Activated CD4-positive, alpha-beta T cell treated with anti-CD3 and anti-CD28 coated beads, Interleukin-2, amount 10 ng/mL, durations not matched to agents 24 days and 14 days (primary cell): ENCODE measurements at regions of chr3 and their contacts with region 1.

Region 1: DNA sequence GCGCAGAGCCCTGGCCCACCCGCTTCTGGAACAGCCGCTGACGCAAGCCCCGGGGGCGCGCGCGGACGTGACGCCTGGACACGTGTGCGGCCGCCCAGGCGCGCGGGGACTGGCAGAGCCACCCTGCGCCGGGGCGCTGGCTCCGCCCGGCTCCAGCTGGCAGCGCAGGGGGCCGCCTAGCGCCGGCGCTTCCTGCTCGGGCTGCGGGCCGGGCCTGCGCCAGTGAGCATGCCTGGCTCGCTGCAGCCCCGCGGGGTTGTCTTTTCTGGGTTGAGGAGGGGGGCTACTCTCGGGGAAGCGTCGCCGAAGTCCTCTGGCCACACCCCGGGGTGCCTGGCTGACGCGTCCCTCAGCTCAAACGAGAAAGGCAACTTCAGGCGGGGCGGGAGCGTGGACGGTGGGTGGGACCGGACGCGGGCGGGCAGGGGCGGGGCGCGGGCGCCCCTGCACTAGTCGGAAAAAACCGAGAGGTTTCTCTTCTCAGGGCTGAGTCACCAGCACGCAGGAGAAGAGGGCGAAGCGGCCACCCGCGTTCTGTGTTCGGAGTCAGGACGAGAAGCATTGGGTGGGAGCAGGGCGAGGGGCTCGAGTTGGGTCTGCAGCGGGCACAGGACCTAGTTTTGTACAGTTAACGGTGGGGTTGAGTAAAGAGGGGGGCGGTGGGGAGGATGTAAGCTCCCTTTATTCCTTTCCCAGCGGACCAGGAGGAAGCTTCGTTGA is at the start of gene SIAH2:
- DNase-seq: peak; percentile 97
- H3K4me3 Mint-ChIP-seq: peak within 1 kb of the TSS; percentile 99
- H3K27ac Mint-ChIP-seq: peak within 1 kb of the TSS; percentile 100
- H3K4me1 Mint-ChIP-seq: peaks cover 51% of the 10 kb centered on the region
- H3K27me3 Mint-ChIP-seq: no peaks in the 10 kb centered on the region
- total RNA-seq, gene SIAH2: 130 and 133 TPM in 2 replicates

Region 2: GRCh38 chr3:150408221-150409102 is 354.8 kb before region 1 on chr3 and contains the start of gene TSC22D2:
- intact Hi-C with region 1: loop called (anchors 1 kb)
- DNase-seq: peak; percentile 99
- H3K4me3 Mint-ChIP-seq: peak within 1 kb of the TSS; percentile 81
- H3K27ac Mint-ChIP-seq: peak within 1 kb of the TSS; percentile 92
- H3K4me1 Mint-ChIP-seq: peaks cover 23% of the 10 kb centered on the region
- H3K27me3 Mint-ChIP-seq: peaks cover 8% of the 10 kb centered on the region
- total RNA-seq, gene TSC22D2: 16.4 and 18.7 TPM in 2 replicates

Region 3: DNA sequence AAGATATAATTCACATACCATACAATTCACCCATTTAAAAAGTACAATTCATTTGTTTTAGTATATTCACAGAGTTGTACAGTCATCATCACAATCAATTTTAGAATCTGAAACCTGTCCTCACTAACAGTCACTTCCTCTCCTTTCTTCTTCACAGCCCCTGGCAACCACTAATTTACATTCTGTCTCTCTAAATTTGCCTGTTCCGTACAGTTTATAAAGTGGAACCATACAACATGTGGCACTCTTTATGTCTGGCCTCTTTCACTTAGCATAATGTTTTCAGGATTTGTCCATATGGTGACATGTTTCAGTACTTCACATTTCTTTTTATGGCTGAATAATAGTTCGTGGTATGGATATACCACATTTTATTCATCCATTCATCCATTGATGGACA is 82.2 kb before region 1 on chr3:
- intact Hi-C with region 1: loop called (anchors 5 kb)
- DNase-seq: peak; percentile 68
- H3K4me3 Mint-ChIP-seq: peak overlapping the region; percentile 18
- H3K27ac Mint-ChIP-seq: peak overlapping the region; percentile 25
- H3K4me1 Mint-ChIP-seq: peaks cover 20% of the 10 kb centered on the region
- H3K27me3 Mint-ChIP-seq: peaks cover 4% of the 10 kb centered on the region

Region 4: GRCh38 chr3:150710097-150710496 is 53.2 kb before region 1 on chr3:
- intact Hi-C with region 1: no loop called
- DNase-seq: no peak
- H3K4me3 Mint-ChIP-seq: no peak overlapping the region
- H3K27ac Mint-ChIP-seq: no peak overlapping the region
- H3K4me1 Mint-ChIP-seq: peaks cover 9% of the 10 kb centered on the region
- H3K27me3 Mint-ChIP-seq: peaks cover 6% of the 10 kb centered on the region

Region 5: DNA sequence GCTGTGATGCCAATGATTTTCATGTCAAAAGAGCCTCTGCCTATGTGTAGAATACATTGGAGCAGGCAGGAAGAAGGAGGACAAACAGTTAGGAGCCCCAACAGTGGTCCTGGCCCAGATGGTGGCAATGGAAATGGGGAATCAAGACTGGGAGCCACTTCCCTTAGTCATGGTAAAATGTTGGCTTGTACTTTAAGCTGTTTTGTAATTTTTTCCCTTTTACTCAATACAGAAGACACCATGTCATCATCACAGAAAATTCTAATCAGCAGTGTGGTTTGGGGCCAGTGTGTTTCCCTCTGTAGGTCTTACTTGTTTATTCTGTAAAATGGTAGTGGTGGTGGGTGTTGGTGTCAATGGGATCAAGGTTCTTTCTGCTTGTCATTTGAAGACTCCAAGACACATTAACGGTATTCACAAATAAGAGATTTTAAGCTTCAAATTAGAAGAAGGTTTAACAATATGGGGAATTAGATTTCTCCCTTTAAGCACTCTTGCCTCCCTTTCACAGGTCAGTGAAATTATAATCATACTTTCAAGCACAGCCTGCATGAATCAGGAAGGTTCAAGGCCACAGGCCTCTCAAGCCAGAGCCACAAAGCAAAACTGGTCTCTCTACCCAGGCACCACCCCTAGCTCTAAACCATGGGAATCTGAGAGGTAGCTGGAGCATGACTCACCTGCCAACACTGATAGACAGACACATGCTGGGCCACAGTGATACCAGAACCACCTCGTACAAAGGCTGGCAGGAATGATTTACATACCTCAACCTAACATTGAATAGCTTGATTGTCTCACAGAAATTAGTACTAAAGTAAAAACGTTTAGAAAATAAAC is 25.2 kb before region 1 on chr3:
- intact Hi-C with region 1: loop called (anchors 1 kb)
- DNase-seq: peak; percentile 72
- H3K4me3 Mint-ChIP-seq: peak overlapping the region; percentile 64
- H3K27ac Mint-ChIP-seq: peak overlapping the region; percentile 99
- H3K4me1 Mint-ChIP-seq: peaks cover 76% of the 10 kb centered on the region
- H3K27me3 Mint-ChIP-seq: no peaks in the 10 kb centered on the region

Region 6: DNA sequence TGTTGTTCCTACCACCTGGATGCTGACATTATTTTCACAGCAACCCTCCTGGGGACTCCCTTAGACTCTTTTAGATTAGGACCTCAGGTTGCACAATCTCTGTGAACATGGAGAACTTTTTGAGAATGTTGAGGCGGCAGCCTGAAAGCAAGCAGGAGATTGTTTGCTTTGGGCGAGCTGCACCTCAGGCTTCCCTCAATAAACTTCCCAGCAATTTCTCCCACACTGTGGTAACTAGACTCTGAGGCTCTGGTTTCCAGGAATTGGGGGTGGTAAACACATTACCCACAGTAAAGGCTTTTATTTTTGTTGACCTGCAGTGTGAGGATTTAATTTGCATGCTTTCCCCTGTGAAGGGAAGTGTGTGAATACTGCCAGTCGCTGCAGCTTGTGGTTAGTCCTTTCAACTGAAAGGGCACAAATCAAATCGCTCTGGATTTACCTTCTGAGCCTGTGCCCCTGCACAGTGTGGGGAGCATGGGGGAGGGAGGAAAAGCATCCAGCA is 34.9 kb after region 1 on chr3:
- intact Hi-C with region 1: loop called (anchors 5 kb)
- DNase-seq: peak; percentile 56
- H3K4me3 Mint-ChIP-seq: no peak overlapping the region
- H3K27ac Mint-ChIP-seq: no peak overlapping the region
- H3K4me1 Mint-ChIP-seq: peaks cover 13% of the 10 kb centered on the region
- H3K27me3 Mint-ChIP-seq: peaks cover 13% of the 10 kb centered on the region

Region 7: DNA sequence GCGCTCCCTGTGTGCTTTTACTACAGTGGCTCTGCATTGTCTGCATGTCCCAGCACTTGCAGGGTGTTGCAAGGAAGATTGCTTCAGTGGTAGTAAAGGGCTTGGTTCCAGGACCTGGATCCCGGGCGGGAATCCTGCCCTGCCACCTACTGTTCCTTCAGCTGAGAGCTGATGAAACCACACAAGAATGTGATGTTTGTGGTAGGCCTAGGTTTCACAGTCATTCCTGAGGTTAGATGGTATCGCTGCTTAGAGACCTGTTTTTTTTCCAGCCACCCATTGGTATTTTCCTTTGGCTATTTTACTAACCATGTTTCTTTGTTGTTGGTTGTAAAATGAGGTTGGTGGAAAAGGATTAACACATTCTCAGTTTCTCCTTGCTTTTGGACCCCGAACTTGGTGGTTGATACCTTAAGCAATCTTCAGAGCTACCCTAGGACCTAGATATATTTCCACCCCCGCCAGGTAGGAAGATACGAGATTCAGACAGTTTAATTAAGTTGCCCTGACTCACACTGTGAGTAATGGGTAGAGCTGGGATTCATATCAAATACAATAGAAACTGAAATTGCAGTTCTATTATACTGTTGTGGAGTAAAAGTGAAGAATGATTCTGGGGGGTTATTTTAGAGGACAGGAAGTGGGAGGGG is 541.9 kb after region 1 on chr3:
- intact Hi-C with region 1: loop called (anchors 5 kb)
- DNase-seq: peak; percentile 65
- H3K4me3 Mint-ChIP-seq: peak overlapping the region; percentile 13
- H3K27ac Mint-ChIP-seq: peak overlapping the region; percentile 80
- H3K4me1 Mint-ChIP-seq: peaks cover 50% of the 10 kb centered on the region
- H3K27me3 Mint-ChIP-seq: peaks cover 2% of the 10 kb centered on the region